ENCODE measurements at regions of chr15 and their contacts with region 1.

Region 1: DNA sequence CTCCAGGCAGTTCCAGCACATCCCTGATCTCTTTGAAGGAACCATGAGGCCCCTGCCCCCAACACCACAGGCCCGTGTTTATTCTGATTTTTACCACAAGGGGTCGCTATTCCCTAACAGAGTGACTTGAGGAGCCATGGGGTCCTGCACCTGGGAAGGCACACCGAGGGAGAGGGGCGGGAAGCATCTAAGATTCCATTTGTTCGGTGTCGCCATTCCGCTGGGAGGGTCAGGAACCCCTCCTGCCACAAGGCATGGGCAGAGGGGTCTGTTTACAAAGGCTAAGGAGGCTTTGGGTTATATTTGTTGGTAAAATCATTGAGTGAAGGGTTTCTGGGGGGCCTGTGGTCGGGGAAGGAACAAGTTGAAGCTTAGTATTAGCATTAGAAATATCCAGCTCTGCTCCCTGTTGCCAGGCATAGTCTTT is 77.1 kb downstream of the WDR76 start:
- DNase-seq: peak; percentile 40
- H3K4me3 ChIP-seq: no peak overlapping the region
- CTCF ChIP-seq: peak; percentile 81

Region 2: DNA sequence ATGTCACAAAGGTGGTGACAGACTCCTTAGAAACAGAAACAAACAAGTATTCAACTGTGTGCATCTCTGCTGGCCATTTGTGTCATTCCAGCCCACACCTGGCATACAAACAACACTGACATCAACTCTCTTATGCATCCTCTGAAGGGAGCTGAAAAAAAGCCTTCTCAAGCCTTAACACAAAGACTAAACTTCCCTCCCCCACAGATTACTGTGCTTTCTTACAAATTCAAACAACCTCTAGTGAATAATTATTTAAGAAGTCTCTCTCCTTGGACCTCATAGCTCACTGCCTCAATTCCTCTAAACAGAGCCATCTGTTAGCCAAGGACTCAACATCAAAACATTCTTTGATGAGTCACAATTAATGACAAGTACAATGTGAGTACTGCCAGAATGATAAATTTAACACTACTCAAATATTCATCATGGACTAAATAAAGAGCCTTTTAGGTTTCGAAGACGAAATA is 55.0 kb after region 1 on chr15:
- in situ Hi-C with region 1: no loop called
- DNase-seq: peak; percentile 38
- H3K4me3 ChIP-seq: no peak overlapping the region
- CTCF ChIP-seq: no peak

Region 3: GRCh38 chr15:44081026-44082013 is 177.4 kb after region 1 on chr15:
- in situ Hi-C with region 1: loop called (anchors 5 kb)
- DNase-seq: peak; percentile 73
- H3K4me3 ChIP-seq: no peak overlapping the region
- CTCF ChIP-seq: no peak

Region 4: GRCh38 chr15:44215594-44215993 is 311.7 kb after region 1 on chr15:
- in situ Hi-C with region 1: loop called (anchors 5 kb)
- DNase-seq: peak; percentile 90
- H3K4me3 ChIP-seq: no peak overlapping the region
- CTCF ChIP-seq: no peak

Region 5: GRCh38 chr15:44489464-44489863 is 585.6 kb after region 1 on chr15:
- in situ Hi-C with region 1: loop called (anchors 25 kb)
- DNase-seq: peak; percentile 72
- H3K4me3 ChIP-seq: no peak overlapping the region
- CTCF ChIP-seq: no peak

Measured in astrocyte of the cerebellum (primary cell).